ENCODE measurements at regions of chr12 and their contacts with region 1.

Region 1: DNA sequence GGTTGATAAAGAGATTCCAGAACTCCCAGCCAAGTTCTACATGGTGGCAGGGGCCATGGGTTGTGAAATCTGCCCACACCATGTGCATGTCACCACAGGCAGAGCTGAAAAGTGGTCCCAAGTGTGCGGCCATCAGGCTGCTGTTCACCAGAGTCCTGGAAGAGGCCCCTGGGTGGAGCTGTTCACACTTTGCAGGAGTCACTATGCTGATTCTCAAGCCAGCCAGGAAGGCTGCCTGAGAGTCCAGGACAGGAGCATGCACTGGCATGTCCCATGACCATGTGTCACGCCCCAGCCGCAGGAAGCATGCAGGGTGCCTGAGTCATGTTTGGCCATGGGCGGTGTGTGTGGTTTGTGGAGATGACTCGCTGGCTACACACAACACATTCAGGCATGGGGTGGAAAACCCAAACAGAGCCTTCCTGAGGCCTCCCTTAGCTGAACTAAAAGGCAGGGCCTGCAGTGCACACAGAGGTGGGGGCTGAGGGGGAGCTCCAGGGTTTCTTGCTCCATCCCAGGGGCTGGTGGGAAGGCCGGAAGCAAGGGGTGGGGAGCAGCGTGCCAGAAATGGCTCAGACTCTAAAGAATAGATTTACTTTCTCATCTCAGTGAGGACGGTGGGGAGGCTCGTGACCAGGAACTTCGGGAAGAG is 19.4 kb downstream of the ABCB9 start:
- DNase-seq: peak; percentile 100
- H3K4me3 ChIP-seq: no peak overlapping the region
- H3K27ac ChIP-seq: peak overlapping the region; percentile 84
- H3K4me1 ChIP-seq: peaks cover 68% of the 10 kb centered on the region
- H3K27me3 ChIP-seq: no peaks in the 10 kb centered on the region
- CTCF ChIP-seq: peak; percentile 67 to 72

Region 2: DNA sequence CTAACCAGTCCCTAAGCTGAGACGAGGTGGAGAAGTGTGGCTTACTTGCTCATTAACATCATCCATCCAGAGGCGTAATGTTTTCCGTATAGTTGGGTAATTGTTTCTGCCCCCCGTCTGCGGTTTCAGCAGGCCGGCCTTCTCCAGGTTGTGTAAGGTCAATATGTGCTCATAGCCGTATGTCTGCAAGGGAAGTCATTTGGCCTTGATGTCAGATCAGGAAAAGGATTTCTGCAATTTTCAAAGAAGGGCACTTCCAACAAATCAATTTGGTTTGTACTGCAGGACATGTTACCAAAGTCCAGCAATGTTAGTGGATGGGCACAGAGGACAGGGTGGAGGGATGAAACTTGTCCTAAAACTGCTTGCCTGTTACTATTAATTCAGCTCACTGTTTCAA is 711.1 kb before region 1 on chr12:
- CTCF ChIA-PET with region 1: no interaction called
- dilution Hi-C with region 1: no loop called
- in situ Hi-C with region 1: no loop called
- intact Hi-C with region 1: no loop called
- DNase-seq: no peak
- H3K4me3 ChIP-seq: no peak overlapping the region
- H3K27ac ChIP-seq: no peak overlapping the region
- H3K4me1 ChIP-seq: peaks cover 7% of the 10 kb centered on the region
- H3K27me3 ChIP-seq: no peaks in the 10 kb centered on the region
- CTCF ChIP-seq: no peak

Region 3: GRCh38 chr12:122841544-122842321 is 105.1 kb before region 1 on chr12:
- CTCF ChIA-PET with region 1: no interaction called
- dilution Hi-C with region 1: loop called (anchors 5 kb)
- in situ Hi-C with region 1: no loop called
- intact Hi-C with region 1: no loop called
- DNase-seq: peak; percentile 57
- H3K4me3 ChIP-seq: no peak overlapping the region
- H3K27ac ChIP-seq: peak overlapping the region; percentile 55
- H3K4me1 ChIP-seq: peaks cover 61% of the 10 kb centered on the region
- H3K27me3 ChIP-seq: no peaks in the 10 kb centered on the region
- CTCF ChIP-seq: no peak

Region 4: DNA sequence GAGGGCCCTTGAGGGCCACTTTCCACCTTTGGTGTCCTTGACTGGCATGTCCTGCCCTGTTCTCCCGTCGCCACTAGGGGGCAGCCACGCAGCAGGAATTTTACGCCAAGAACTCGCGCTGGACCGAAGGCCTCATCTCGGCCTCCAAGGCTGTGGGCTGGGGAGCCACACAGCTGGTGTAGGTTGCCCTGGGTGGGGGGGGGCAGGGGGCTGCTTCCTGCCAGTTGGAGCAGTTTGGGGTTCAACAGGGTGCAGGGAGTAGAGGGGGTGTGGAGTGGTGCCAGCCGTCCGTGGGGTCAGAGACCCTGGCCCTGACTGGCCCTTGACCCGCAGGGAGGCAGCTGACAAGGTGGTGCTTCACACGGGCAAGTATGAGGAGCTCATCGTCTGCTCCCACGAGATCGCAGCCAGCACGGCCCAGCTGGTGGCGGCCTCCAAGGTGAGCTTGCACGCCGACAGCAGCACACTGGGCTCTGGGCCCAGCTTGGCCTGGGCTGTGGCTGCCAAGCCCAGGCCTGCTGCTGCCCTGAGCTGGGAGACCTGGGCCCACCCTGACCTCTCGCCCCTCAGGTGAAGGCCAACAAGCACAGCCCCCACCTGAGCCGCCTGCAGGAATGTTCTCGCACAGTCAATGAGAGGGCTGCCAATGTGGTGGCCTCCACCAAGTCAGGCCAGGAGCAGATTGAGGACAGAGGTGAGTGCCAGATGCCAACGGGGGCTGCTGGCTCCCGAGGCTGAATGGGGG is 86.3 kb before region 1 on chr12:
- CTCF ChIA-PET with region 1: interaction called, 5 read pairs
- dilution Hi-C with region 1: no loop called
- in situ Hi-C with region 1: loop called in 1 of 2 experiments (anchors 5 kb)
- intact Hi-C with region 1: loop called (anchors 1 kb)
- DNase-seq: peak; percentile 64
- H3K4me3 ChIP-seq: no peak overlapping the region
- H3K27ac ChIP-seq: no peak overlapping the region
- H3K4me1 ChIP-seq: peaks cover 26% of the 10 kb centered on the region
- H3K27me3 ChIP-seq: no peaks in the 10 kb centered on the region
- CTCF ChIP-seq: peak; percentile 66 to 94

Region 5: GRCh38 chr12:122880668-122881067 is 66.1 kb before region 1 on chr12:
- CTCF ChIA-PET with region 1: interaction called, 5 read pairs
- dilution Hi-C with region 1: loop called (anchors 5 kb)
- in situ Hi-C with region 1: no loop called
- intact Hi-C with region 1: no loop called
- DNase-seq: no peak
- H3K4me3 ChIP-seq: no peak overlapping the region
- H3K27ac ChIP-seq: no peak overlapping the region
- H3K4me1 ChIP-seq: peaks cover 27% of the 10 kb centered on the region
- H3K27me3 ChIP-seq: no peaks in the 10 kb centered on the region
- CTCF ChIP-seq: peak in 1 of 2 donors; percentile 37

Region 6: GRCh38 chr12:122888232-122888867 is 58.5 kb before region 1 on chr12:
- CTCF ChIA-PET with region 1: interaction called, 10 read pairs
- dilution Hi-C with region 1: loop called (anchors 5 kb)
- in situ Hi-C with region 1: no loop called
- intact Hi-C with region 1: loop called (anchors 1 kb)
- DNase-seq: peak; percentile 100
- H3K4me3 ChIP-seq: peak overlapping the region; percentile 33 to 40 (median 37)
- H3K27ac ChIP-seq: peak overlapping the region; percentile 99
- H3K4me1 ChIP-seq: peaks cover 83% of the 10 kb centered on the region
- H3K27me3 ChIP-seq: no peaks in the 10 kb centered on the region
- CTCF ChIP-seq: no peak

Region 7: GRCh38 chr12:122895705-122896636 is 50.8 kb before region 1 on chr12 and contains the start of gene VPS37B:
- CTCF ChIA-PET with region 1: interaction called, 3 read pairs
- dilution Hi-C with region 1: no loop called
- in situ Hi-C with region 1: no loop called
- intact Hi-C with region 1: loop called (anchors 1 kb)
- DNase-seq: peak; percentile 81
- H3K4me3 ChIP-seq: peak within 1 kb of the TSS; percentile 83 to 89 (median 86)
- H3K27ac ChIP-seq: peak within 1 kb of the TSS; percentile 99
- H3K4me1 ChIP-seq: peaks cover 57% of the 10 kb centered on the region
- H3K27me3 ChIP-seq: no peaks in the 10 kb centered on the region
- CTCF ChIP-seq: no peak
- total RNA-seq, gene VPS37B: 30.8 to 60.7 TPM

Region 8: GRCh38 chr12:122917504-122918121 is 29.2 kb before region 1 on chr12:
- CTCF ChIA-PET with region 1: no interaction called
- dilution Hi-C with region 1: no loop called
- in situ Hi-C with region 1: no loop called
- intact Hi-C with region 1: loop called (anchors 1 kb)
- DNase-seq: peak; percentile 68
- H3K4me3 ChIP-seq: no peak overlapping the region
- H3K27ac ChIP-seq: peak overlapping the region; percentile 25
- H3K4me1 ChIP-seq: peaks cover 26% of the 10 kb centered on the region
- H3K27me3 ChIP-seq: no peaks in the 10 kb centered on the region
- CTCF ChIP-seq: no peak

Measured in mammary epithelial cell (primary cell).